Mammary epithelial cell (primary cell): ENCODE measurements at regions of chr15 and their contacts with region 1.

Region 1: GRCh38 chr15:40079456-40079855 is 29.2 kb downstream of the BMF start:
- DNase-seq: no peak
- H3K4me3 ChIP-seq: no peak overlapping the region
- H3K27ac ChIP-seq: no peak overlapping the region
- H3K4me1 ChIP-seq: peaks cover 23% of the 10 kb centered on the region
- H3K27me3 ChIP-seq: no peaks in the 10 kb centered on the region
- CTCF ChIP-seq: no peak

Region 2: GRCh38 chr15:39987821-39988220 is 91.6 kb before region 1 on chr15:
- CTCF ChIA-PET with region 1: no interaction called
- dilution Hi-C with region 1: no loop called
- in situ Hi-C with region 1: no loop called
- intact Hi-C with region 1: no loop called
- DNase-seq: no peak
- H3K4me3 ChIP-seq: no peak overlapping the region
- H3K27ac ChIP-seq: no peak overlapping the region
- H3K4me1 ChIP-seq: no peaks in the 10 kb centered on the region
- H3K27me3 ChIP-seq: no peaks in the 10 kb centered on the region
- CTCF ChIP-seq: no peak

Region 3: DNA sequence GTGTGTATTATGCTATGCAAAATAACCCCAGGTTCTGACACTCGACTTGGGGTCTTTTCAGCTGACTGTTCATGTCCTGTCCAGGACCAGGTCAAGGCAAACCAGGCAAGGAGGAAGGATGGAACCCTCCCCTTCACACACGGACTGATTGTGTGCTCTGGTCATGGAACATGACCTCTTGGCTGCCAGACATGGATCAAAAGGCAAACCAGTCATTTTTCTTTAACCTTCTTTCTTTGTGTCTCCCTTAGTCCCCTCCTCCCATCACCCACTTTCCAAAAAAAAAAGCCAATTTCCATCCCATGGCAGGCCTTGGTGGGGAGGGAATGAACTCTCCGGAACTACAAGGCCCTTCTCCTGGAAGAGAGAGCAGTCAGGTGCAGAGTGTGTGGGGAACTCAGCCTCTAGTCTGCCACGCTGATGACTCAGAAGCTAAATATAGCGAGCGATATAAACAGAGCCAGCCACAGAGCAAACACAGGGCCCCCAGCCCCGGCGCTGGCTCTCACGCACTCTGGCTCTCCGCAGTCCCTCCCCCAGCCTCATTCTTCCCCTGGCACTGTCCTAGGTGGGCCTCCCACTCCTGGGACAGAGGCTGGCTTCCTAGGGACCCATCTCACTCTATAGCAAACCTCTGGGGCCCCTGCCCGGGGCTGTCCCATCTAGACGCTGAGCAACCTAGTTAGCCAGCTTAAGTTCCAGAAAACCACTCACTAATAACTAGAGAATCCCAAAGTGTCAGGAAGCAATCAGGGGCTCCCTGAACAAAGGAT is 19.2 kb after region 1 on chr15:
- CTCF ChIA-PET with region 1: no interaction called
- dilution Hi-C with region 1: no loop called
- in situ Hi-C with region 1: no loop called
- intact Hi-C with region 1: loop called (anchors 1 kb)
- DNase-seq: peak; percentile 61
- H3K4me3 ChIP-seq: no peak overlapping the region
- H3K27ac ChIP-seq: no peak overlapping the region
- H3K4me1 ChIP-seq: peaks cover 14% of the 10 kb centered on the region
- H3K27me3 ChIP-seq: no peaks in the 10 kb centered on the region
- CTCF ChIP-seq: no peak